ENCODE measurements at regions of chr3 and their contacts with region 1.

Region 1: GRCh38 chr3:55746808-55747413 is 259.8 kb upstream of the WNT5A start:
- DNase-seq: peak; percentile 67
- H3K4me3 ChIP-seq: no peak overlapping the region
- H3K27ac ChIP-seq: peak overlapping the region; percentile 12
- H3K4me1 ChIP-seq: peaks cover 19% of the 10 kb centered on the region
- CTCF ChIP-seq: peak; percentile 87

Region 2: GRCh38 chr3:55728461-55729100 is 18.3 kb before region 1 on chr3:
- CTCF ChIA-PET with region 1: interaction called, 7 read pairs
- POLR2A ChIA-PET with region 1: interaction called, 18 read pairs
- intact Hi-C with region 1: loop called (anchors 1 kb)
- DNase-seq: peak; percentile 79
- H3K4me3 ChIP-seq: peak overlapping the region; percentile 4
- H3K27ac ChIP-seq: peak overlapping the region; percentile 94
- H3K4me1 ChIP-seq: peaks cover 75% of the 10 kb centered on the region
- CTCF ChIP-seq: no peak

Region 3: DNA sequence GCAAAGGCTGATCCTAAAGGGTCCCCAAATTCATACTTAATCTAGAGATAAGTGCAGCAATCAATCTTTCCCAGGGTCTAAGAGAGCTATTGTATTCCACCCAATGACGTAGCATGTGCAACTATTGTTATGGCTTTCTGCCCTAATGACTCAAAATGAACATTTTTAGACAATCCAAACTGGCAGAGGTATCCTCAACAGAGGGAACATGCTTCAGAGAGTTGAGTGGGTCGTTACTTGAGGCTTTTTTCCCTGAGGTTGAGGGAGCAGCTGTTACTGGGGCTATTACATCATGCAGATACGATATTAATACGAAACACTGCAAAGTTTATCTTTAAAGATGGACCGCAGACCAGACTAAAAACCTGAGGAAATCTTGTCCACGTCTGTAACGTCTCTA is 18.5 kb after region 1 on chr3:
- CTCF ChIA-PET with region 1: no interaction called
- POLR2A ChIA-PET with region 1: no interaction called
- intact Hi-C with region 1: no loop called
- DNase-seq: no peak
- H3K4me3 ChIP-seq: no peak overlapping the region
- H3K27ac ChIP-seq: no peak overlapping the region
- H3K4me1 ChIP-seq: no peaks in the 10 kb centered on the region
- CTCF ChIP-seq: no peak